CD4-positive, alpha-beta memory T cell (primary cell): ENCODE measurements at regions of chr13 and their contacts with region 1.

Region 1: DNA sequence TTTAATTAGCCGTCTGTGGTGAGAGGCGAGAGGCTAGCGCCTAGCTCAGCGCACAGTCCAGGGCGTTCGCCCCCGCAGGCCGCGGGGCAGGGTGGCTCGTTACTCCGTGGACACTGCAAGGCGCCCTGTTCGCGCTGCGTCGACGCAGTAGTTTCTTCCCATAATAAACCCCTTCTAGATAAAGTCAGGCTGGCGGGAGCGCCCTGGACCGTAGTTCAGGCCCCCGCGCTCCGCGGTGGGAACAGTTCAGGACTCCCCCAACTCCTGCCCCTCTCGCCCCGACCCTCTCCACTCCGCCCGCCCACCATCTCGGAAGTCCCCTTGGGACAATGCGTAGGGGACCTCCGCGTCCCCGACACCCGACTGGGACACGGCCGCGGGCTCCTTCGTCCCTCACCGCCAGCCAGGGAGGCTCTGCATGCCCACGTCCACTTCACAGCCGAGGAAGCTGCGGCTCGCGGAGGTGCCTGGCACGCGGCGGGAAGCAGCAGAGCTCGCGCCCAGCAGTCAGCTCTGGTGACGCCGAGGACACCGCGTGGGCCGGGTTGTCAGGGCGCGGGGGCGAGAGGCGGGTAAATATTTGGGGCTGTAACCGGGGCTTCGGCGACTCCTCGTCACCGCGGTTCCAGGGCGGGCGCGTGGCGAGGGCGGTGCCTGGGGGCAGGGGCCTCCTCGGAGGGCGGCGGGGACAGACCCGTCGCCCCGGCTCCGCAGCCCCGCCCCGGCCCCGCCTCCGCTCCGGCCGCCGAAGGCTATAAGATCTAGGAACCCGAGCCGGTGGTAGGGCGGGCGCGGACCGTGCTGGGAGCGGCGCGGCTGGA is at the start of gene RGCC:
- DNase-seq: peak; percentile 96 to 97 (median 97)
- H3K4me3 ChIP-seq: peak within 1 kb of the TSS; percentile 61 to 99
- H3K4me3 Mint-ChIP-seq: peak within 1 kb of the TSS; percentile 90 to 99 (median 94)
- H3K27ac ChIP-seq: peak within 1 kb of the TSS; percentile 93
- H3K27ac Mint-ChIP-seq: peak within 1 kb of the TSS; percentile 96 to 99 (median 97)
- H3K4me1 ChIP-seq: peaks cover 38% of the 10 kb centered on the region
- H3K4me1 Mint-ChIP-seq: peaks cover 28 to 53% (median 41%) of the 10 kb centered on the region in 4 donors
- H3K27me3 ChIP-seq: no peaks in the 10 kb centered on the region
- H3K27me3 Mint-ChIP-seq: no peaks in the 10 kb centered on the region
- total RNA-seq, gene RGCC: 146 to 154 TPM

Region 2: DNA sequence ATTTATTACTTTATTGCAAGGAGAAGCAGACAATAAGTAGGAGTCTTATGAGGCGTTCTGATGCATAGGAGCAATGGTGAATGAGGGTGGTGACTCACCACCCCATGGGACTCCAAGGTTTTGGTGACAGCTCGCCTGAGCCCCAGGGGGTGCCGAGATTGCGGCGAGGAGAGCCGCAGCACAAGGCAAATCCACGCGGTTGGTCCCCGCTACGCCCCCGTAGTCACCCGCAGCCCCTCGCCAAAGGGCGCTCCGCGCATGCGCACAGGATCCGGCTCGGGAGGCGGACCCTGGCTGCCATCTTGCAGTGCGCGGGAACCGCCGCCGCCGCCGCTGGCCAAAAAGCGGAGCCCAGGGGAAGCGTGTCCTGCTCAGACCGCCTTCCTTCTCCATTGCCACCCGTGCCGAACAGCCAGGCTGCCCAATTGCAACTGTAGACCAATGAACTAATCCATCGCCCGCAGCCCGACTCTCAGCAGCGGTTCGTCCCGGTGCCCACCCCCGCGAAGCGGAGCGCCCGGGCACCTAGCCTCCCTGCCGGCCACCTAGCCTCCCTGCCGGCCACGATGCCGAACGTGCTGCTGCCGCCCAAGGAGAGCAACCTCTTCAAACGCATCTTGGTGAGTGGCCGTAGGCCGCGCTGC is 145.9 kb before region 1 on chr13 and contains the start of gene NAA16:
- CTCF ChIA-PET with region 1: no interaction called
- POLR2A ChIA-PET with region 1: interaction called, 6 read pairs
- intact Hi-C with region 1: loop called (anchors 2 kb)
- DNase-seq: peak; percentile 92 to 94 (median 93)
- H3K4me3 ChIP-seq: peak within 1 kb of the TSS; percentile 85 to 94
- H3K4me3 Mint-ChIP-seq: peak within 1 kb of the TSS; percentile 94 to 97 (median 96)
- H3K27ac ChIP-seq: peak within 1 kb of the TSS; percentile 83
- H3K27ac Mint-ChIP-seq: peak within 1 kb of the TSS; percentile 94 to 96 (median 96)
- H3K4me1 ChIP-seq: peaks cover 45% of the 10 kb centered on the region
- H3K4me1 Mint-ChIP-seq: peaks cover 22 to 46% (median 36%) of the 10 kb centered on the region in 4 donors
- H3K27me3 ChIP-seq: no peaks in the 10 kb centered on the region
- H3K27me3 Mint-ChIP-seq: no peaks in the 10 kb centered on the region
- total RNA-seq, gene NAA16: 62.3 to 62.5 TPM

Region 3: GRCh38 chr13:41492404-41493260 is 35.7 kb after region 1 on chr13:
- CTCF ChIA-PET with region 1: interaction called, 69 read pairs
- POLR2A ChIA-PET with region 1: interaction called, 130 read pairs
- intact Hi-C with region 1: no loop called
- DNase-seq: peak; percentile 52 to 58 (median 57)
- H3K4me3 ChIP-seq: peak overlapping the region; percentile 1 to 56
- H3K4me3 Mint-ChIP-seq: peak overlapping the region; percentile 61 to 85 (median 74)
- H3K27ac ChIP-seq: peak overlapping the region; percentile 57
- H3K27ac Mint-ChIP-seq: peak overlapping the region; percentile 97 to 98 (median 97)
- H3K4me1 ChIP-seq: peaks cover 77% of the 10 kb centered on the region
- H3K4me1 Mint-ChIP-seq: peaks cover 39 to 68% (median 51%) of the 10 kb centered on the region in 4 donors
- H3K27me3 ChIP-seq: no peaks in the 10 kb centered on the region
- H3K27me3 Mint-ChIP-seq: no peaks in the 10 kb centered on the region

Region 4: DNA sequence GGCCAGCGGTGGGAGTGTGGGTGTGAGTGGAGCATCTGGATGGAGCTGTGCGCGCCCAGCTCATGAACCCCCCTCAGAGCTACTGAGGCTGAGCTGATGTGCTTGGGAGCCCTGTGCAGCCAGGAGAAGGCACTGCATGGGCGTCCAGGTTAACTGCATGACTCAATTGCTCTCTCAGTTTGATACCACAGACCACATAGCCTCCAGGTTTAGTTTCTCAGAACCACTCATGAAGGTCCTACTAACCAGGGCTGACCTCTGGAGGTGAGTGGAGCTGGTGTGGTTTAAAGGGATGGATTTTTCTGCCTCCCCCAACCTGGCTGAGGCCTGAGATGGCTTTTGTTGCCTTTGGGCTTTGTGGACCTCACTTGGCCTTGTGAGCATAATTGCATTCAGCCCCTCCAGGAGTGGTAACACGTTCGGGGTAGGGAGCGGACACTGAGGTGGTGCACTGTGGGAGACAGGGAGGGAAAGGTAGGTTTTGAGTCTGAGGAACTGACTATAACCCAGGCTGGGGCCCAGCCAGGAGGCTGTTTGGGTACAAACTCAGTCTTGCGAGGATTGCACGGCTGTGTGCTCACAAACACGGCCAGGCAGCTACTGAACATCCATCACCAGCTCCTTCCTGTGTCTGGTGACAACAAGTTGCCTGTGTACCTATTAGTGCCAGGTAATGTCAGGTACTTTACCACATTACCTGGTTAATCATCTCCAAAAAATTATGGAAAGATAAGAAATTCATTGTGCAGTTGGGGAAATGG is 97.8 kb after region 1 on chr13:
- CTCF ChIA-PET with region 1: interaction called, 7 read pairs
- POLR2A ChIA-PET with region 1: interaction called, 10 read pairs
- intact Hi-C with region 1: no loop called
- DNase-seq: no peak
- H3K4me3 ChIP-seq: no peak overlapping the region
- H3K4me3 Mint-ChIP-seq: no peak overlapping the region
- H3K27ac ChIP-seq: no peak overlapping the region
- H3K27ac Mint-ChIP-seq: peak overlapping the region in 1 of 7 donors; percentile 36
- H3K4me1 ChIP-seq: no peaks in the 10 kb centered on the region
- H3K4me1 Mint-ChIP-seq: peaks cover 0 to 3% (median 0%) of the 10 kb centered on the region in 4 donors
- H3K27me3 ChIP-seq: no peaks in the 10 kb centered on the region
- H3K27me3 Mint-ChIP-seq: no peaks in the 10 kb centered on the region

Region 5: DNA sequence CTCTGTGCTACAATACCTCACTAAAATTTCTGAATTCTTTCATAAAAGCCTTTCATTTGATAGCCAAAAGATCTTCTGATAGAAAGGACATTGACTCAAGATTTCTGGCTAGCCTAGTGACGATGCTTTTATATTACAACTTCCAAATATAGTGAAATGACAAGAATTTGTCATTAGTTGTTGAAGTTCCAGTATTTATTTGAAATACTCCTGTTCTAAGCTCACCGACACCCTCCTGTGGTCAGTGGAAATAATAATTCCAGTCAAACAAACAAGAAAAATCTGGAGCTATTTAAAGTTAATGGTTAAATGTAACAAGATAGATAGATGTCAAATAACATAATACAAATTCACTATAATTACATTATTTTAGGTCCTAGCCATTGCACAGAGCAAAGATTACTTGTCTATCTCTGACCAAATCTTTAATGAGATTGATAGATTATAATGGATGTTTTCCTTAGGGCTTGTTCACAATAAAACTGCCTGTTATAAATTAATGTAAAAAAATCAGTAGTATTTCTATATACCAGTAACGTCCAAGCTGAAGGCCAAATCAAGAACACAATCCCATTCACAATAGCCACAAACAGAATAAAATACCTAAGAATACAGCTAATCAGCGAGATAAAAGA is 195.9 kb after region 1 on chr13:
- CTCF ChIA-PET with region 1: interaction called, 82 read pairs
- POLR2A ChIA-PET with region 1: interaction called, 19 read pairs
- intact Hi-C with region 1: loop called (anchors 1 kb)
- DNase-seq: peak; percentile 45 to 54 (median 50)
- H3K4me3 ChIP-seq: no peak overlapping the region
- H3K4me3 Mint-ChIP-seq: no peak overlapping the region
- H3K27ac ChIP-seq: no peak overlapping the region
- H3K27ac Mint-ChIP-seq: peak overlapping the region in 3 of 7 donors; percentile 19 to 86 (median 43)
- H3K4me1 ChIP-seq: no peaks in the 10 kb centered on the region
- H3K4me1 Mint-ChIP-seq: peaks cover 4 to 9% (median 7%) of the 10 kb centered on the region in 4 donors
- H3K27me3 ChIP-seq: no peaks in the 10 kb centered on the region
- H3K27me3 Mint-ChIP-seq: no peaks in the 10 kb centered on the region

Region 6: GRCh38 chr13:41720839-41721561 is 264.0 kb after region 1 on chr13:
- CTCF ChIA-PET with region 1: no interaction called
- POLR2A ChIA-PET with region 1: no interaction called
- intact Hi-C with region 1: no loop called
- DNase-seq: no peak
- H3K4me3 ChIP-seq: no peak overlapping the region
- H3K4me3 Mint-ChIP-seq: no peak overlapping the region
- H3K27ac ChIP-seq: no peak overlapping the region
- H3K27ac Mint-ChIP-seq: no peak overlapping the region
- H3K4me1 ChIP-seq: no peaks in the 10 kb centered on the region
- H3K4me1 Mint-ChIP-seq: no peaks in the 10 kb centered on the region
- H3K27me3 ChIP-seq: no peaks in the 10 kb centered on the region
- H3K27me3 Mint-ChIP-seq: no peaks in the 10 kb centered on the region